Heart right ventricle (tissue), 16 donors: ENCODE measurements at regions of chr12 and their contacts with region 1.

Region 1: DNA sequence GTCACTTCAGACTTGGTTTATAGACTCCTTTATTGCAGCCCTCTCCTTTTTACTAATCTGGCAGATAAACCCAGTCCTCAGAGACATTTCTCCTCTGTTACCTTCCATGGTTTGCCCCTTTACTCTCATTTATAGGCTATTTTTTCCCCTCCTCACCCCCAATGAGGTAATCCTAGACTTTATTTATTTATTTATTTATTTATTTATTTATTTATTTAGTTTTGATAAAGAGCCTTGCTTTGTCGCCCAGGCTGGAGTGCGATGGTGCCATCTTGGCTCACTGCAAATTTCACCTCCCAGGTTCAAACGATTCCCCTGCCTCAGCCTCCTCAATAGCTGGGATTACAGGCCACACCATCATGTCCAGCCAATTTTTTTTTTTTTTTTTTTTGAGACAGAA is 8.4 kb downstream of the FGD4 start:
- DNase-seq: no peak
- ATAC-seq: no peak
- H3K4me3 ChIP-seq: no peak overlapping the region
- H3K27ac ChIP-seq: no peak overlapping the region
- H3K4me1 ChIP-seq: peaks cover 0 to 14% (median 0%) of the 10 kb centered on the region in 9 donors
- H3K27me3 ChIP-seq: no peaks in the 10 kb centered on the region
- CTCF ChIP-seq: no peak

Region 2: DNA sequence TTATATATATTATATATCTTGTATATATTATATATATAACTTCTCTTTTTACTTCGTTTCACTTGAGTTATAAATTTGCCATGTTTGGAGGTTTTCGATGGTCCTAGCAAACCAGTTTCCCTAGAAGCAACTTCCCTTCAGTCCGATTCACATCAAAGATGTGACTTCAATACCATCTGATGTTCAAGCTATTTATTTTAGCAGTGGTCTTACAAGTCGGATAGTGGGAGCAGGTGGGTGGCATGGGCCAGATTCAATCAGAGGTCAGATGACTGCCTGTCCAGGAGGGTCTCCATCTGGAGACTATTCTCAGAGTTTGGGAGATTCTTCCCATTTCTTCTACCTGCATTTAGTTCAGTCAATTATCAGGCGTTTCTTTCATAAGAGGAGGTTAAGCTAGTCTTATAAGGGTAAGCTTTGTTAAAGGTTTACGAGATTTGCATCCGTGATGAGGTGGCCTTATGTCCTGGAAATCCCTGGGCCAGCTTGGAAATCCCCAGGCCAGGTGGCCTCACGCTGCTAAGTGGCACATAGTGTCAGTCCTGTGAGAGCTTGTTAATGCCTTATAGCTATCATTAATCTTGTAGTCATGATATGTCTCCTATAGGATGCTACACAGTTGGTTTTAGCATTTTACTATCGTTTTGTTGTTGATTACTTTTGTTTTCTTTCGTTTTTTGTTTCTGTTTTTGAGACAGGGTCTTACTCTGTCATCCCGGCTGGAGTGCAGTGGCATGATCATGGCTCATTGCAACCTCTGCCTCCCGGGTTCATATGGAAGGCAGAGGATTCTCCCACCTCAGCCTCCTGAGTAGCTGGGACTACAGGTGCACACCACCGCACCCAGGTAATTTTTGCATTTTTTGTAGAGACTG is 155.4 kb before region 1 on chr12:
- intact Hi-C with region 1: no loop called
- DNase-seq: no peak
- ATAC-seq: no peak
- H3K4me3 ChIP-seq: no peak overlapping the region
- H3K27ac ChIP-seq: no peak overlapping the region
- H3K4me1 ChIP-seq: peaks cover 0 to 4% (median 0%) of the 10 kb centered on the region in 9 donors
- H3K27me3 ChIP-seq: no peaks in the 10 kb centered on the region
- CTCF ChIP-seq: no peak

Region 3: DNA sequence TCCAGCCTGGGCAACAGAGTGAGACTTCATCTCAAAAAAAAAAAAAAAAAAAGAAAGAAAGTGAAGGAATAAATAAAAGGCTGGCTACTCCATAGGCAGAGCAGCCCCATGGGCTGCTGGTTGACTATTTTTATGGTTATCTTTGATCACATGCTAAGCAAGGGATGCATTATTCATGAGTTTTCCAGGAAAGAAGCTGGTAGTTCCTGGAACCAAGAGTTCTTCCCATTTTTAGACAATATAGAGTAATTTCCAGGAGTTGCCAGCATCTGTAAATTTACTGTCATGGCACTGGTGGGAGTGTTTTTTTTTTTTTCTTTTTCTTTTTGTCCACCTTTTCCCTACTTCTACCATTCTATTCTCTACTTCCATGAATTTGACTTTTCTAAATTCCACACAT is 15.8 kb after region 1 on chr12:
- intact Hi-C with region 1: loop called in 1 of 10 experiments (anchors 2 kb)
- DNase-seq: no peak
- ATAC-seq: no peak
- H3K4me3 ChIP-seq: no peak overlapping the region
- H3K27ac ChIP-seq: peak overlapping the region in 1 of 10 donors; percentile 57
- H3K4me1 ChIP-seq: peaks cover 4 to 29% (median 11%) of the 10 kb centered on the region in 9 donors
- H3K27me3 ChIP-seq: no peaks in the 10 kb centered on the region
- CTCF ChIP-seq: no peak